ENCODE measurements at regions of chr2 and their contacts with region 1.

Region 1: DNA sequence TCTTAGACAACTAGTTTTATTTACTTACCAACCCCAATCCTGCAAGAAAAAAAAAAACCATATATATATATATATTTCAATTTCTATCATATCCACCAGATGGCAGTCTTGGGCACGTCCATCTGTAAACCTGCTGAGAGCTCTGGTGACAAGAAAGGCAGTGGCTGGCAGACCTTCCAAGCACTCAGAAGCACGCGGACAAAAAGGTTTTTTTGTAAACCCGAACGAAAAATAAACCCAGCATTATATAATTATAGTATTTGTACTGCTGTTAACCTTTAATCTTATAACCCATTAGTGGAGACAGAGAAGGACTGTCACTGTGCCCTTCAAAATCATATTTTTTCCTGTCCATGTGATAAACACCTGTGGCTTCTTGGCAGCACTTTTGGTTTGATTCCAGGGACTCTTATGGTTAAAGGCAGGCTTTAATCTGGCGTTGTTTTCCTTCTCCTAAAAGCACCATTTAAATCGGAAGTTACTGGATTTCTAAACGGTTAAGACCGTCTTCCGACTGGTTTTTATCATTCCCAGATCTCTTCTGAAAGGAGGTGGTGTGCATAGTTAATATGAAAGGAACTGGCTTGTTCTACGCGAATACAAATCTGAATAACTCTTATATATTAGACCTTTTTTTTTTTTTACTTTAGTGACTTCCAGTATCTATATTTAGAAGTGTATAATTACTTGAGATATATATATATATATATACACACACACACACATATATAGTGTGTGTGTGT is 31.0 kb upstream of the SLC3A1 start:
- DNase-seq: peak; percentile 61
- ATAC-seq: peak; percentile 77
- H3K4me3 ChIP-seq: peak overlapping the region; percentile 21 to 38
- H3K27ac ChIP-seq: peak overlapping the region; percentile 81
- H3K4me1 ChIP-seq: peaks cover 23% of the 10 kb centered on the region
- H3K27me3 ChIP-seq: no peaks in the 10 kb centered on the region
- CTCF ChIP-seq: peak; percentile 80

Region 2: GRCh38 chr2:44291281-44292248 is 47.3 kb after region 1 on chr2:
- CTCF ChIA-PET with region 1: interaction called, 3 read pairs
- POLR2A ChIA-PET with region 1: interaction called, 4 read pairs
- in situ Hi-C with region 1: no loop called
- intact Hi-C with region 1: loop called (anchors 5 kb)
- DNase-seq: peak; percentile 77
- ATAC-seq: peak; percentile 94
- H3K4me3 ChIP-seq: peak overlapping the region in 1 of 2 experiments; percentile 32; a peak in 2 of 4 replicates
- H3K27ac ChIP-seq: peak overlapping the region; percentile 82
- H3K4me1 ChIP-seq: peaks cover 12% of the 10 kb centered on the region
- H3K27me3 ChIP-seq: no peaks in the 10 kb centered on the region
- CTCF ChIP-seq: peak; percentile 84